ENCODE measurements at regions of chr5 and their contacts with region 1.

Region 1: DNA sequence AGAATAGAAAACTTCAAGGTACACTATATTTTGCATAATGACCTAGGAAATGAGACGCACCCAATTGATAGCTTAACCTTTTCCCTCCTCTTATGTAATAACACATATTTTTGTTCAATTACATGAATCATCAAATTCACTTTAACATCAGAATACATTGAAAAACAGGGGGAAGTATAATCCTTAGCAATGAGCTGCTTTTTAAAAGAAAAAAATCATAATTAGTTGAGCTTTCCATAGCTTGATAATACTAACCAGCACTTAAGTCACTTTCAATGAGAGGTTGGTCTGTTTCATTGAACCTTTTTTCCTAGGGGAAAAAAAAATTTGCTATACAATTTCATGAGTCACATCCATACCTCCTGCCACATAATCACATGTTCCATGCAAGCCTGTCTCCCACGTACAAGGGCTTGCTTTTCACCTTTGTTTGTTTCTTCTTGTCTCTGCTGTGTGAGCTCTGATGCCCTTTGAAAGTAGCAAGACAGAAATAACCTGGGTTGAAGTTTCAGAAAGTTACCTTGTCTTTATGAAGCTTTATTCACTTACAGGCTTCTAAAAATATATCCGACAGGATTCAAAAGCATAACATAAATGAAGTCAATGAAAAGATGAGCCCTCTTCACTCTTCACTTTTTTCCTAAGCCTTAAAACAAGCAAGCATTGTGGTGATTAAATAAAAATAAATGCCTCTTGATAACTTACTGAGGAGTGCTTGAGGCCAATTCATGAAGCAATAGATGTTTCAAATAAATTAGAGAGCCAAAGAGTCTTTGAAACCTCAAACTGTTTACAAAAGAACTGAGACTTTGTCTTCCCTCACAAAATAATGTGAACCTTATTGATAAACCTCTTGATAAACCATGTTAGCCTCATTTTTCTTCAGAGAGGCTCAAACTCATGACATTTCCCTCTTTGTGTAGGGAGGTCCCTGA is 108.5 kb downstream of the FEM1C start:
- DNase-seq: no peak
- H3K4me3 ChIP-seq: no peak overlapping the region
- CTCF ChIP-seq: no peak

Region 2: GRCh38 chr5:115487756-115488155 is 51.7 kb after region 1 on chr5:
- in situ Hi-C with region 1: loop called (anchors 5 kb)
- DNase-seq: no peak
- H3K4me3 ChIP-seq: no peak overlapping the region
- CTCF ChIP-seq: no peak